Heart right ventricle (tissue), 16 donors: ENCODE measurements at regions of chr5 and their contacts with region 1.

Region 1: DNA sequence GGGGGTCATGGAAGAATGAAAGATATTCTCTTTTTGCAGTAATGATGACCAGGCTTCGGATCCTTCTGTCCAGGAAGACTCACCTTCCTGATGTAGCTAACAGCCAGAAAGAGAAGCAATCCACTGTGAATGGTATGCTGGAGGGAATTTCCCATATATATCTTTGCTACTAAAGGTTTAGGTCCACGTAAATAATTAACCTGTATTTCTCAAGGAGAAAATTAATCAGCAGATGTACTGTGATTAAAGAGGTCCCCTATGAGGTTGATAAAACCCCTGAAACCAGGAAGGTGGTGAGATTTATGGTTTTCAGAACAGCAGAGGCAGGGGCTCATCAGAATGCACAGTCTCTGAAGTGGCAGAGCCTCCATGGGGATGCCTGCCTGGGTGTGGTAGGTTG is 11.4 kb upstream of the RAB3C start:
- DNase-seq: no peak
- ATAC-seq: no peak
- H3K4me3 ChIP-seq: no peak overlapping the region
- H3K27ac ChIP-seq: no peak overlapping the region
- H3K4me1 ChIP-seq: no peaks in the 10 kb centered on the region
- H3K27me3 ChIP-seq: peaks cover 0 to 14% (median 0%) of the 10 kb centered on the region in 7 donors
- CTCF ChIP-seq: no peak

Region 2: GRCh38 chr5:58543723-58544122 is 27.8 kb before region 1 on chr5:
- intact Hi-C with region 1: loop called in 1 of 10 experiments (anchors 2 kb)
- DNase-seq: no peak
- ATAC-seq: no peak
- H3K4me3 ChIP-seq: no peak overlapping the region
- H3K27ac ChIP-seq: peak overlapping the region in 1 of 10 donors; percentile 80
- H3K4me1 ChIP-seq: peaks cover 0 to 37% (median 0%) of the 10 kb centered on the region in 9 donors
- H3K27me3 ChIP-seq: no peaks in the 10 kb centered on the region
- CTCF ChIP-seq: no peak